Right cardiac atrium (tissue), 5 donors: ENCODE measurements at regions of chr7 and their contacts with region 1.

Region 1: DNA sequence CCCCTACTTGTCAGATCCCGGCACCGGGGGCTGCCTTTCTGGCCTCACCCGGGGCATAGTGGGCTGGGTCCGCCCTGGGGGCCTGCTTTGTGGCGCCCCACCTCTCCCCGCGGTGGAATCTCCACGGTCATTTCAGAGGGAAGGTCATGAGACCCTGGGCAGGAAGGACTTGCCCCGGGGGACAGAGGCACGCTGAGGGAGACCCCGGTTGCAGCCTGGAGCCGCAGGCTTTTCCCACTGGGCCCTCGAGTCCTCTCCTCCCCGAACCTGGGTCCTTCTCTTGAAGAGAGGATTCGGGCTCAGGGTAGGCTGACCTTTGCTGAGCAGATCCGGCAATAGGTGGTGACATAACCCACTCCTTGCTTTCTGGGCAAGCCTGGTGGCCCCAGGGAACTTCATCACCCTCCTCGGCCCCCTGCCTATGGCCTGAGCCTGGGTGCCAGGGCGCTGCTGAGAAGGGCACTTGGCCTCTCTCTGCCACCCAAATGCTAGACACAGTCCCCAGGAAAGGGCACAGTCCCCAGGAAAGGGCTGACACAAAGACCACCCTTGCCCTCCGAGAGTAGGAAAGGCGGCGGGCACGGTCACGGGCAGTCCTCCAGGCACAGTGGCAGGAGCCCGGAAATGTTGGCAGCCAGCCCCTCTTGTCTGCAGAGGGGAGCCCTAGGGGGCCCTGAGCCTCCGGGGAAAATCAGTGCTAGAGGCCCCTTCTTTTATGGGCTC is 36.2 kb downstream of the FKBP6 start:
- DNase-seq: no peak
- ATAC-seq: peak in 1 of 2 donors; percentile 25
- H3K4me3 ChIP-seq: no peak overlapping the region
- H3K27ac ChIP-seq: no peak overlapping the region
- H3K4me1 ChIP-seq: no peaks in the 10 kb centered on the region
- H3K27me3 ChIP-seq: no peaks in the 10 kb centered on the region

Region 2: DNA sequence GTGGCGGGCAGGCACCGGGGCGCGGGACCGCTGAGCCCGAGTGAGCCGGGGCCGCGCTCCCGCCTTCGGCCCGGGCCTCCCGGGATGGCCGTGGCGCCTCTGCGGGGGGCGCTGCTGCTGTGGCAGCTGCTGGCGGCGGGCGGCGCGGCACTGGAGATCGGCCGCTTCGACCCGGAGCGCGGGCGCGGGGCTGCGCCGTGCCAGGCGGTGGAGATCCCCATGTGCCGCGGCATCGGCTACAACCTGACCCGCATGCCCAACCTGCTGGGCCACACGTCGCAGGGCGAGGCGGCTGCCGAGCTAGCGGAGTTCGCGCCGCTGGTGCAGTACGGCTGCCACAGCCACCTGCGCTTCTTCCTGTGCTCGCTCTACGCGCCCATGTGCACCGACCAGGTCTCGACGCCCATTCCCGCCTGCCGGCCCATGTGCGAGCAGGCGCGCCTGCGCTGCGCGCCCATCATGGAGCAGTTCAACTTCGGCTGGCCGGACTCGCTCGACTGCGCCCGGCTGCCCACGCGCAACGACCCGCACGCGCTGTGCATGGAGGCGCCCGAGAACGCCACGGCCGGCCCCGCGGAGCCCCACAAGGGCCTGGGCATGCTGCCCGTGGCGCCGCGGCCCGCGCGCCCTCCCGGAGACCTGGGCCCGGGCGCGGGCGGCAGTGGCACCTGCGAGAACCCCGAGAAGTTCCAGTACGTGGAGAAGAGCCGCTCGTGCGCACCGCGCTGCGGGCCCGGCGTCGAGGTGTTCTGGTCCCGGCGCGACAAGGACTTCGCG is 69.9 kb after region 1 on chr7:
- intact Hi-C with region 1: loop called in 1 of 4 experiments (anchors 10 kb)
- DNase-seq: peak in 2 of 3 donors; percentile 45 to 62
- ATAC-seq: no peak
- H3K4me3 ChIP-seq: peak overlapping the region; percentile 44
- H3K27ac ChIP-seq: no peak overlapping the region
- H3K4me1 ChIP-seq: no peaks in the 10 kb centered on the region
- H3K27me3 ChIP-seq: no peaks in the 10 kb centered on the region